Esophagus muscularis mucosa (tissue), 4 donors: ENCODE measurements at regions of chr5 and their contacts with region 1.

Region 1: DNA sequence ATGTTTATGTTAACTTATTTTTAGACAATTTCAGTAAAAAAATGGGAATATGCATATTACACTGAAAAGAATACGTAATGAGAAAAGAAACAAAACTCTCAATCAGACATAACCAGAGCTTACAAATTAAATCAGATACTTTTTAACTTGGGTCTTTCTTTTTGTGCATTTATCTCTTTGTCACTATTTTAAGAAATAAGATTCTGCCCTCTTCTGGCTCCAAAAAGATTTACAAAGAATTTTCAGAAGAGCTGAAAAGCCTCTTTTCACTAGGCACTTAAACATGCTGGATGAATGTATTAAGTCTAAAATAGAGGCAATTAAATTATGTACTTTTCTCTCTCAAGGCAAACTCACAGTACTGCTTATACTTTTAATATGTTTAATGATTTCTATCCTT is 55.5 kb downstream of the CEP120 start:
- DNase-seq: no peak
- H3K4me3 ChIP-seq: no peak overlapping the region
- H3K27ac ChIP-seq: no peak overlapping the region
- H3K4me1 ChIP-seq: peaks cover 3 to 34% (median 28%) of the 10 kb centered on the region in 4 donors
- H3K27me3 ChIP-seq: no peaks in the 10 kb centered on the region
- CTCF ChIP-seq: peak; percentile 36 to 48 (median 47)
- EP300 ChIP-seq: no peak
- POLR2A ChIP-seq: no peak

Region 2: GRCh38 chr5:122500245-122501075 is 867.3 kb before region 1 on chr5:
- intact Hi-C with region 1: loop called (anchors 5 kb)
- DNase-seq: no peak
- H3K4me3 ChIP-seq: no peak overlapping the region
- H3K27ac ChIP-seq: peak overlapping the region in 2 of 4 donors; percentile 42 to 48
- H3K4me1 ChIP-seq: peaks cover 0 to 14% (median 10%) of the 10 kb centered on the region in 4 donors
- H3K27me3 ChIP-seq: no peaks in the 10 kb centered on the region
- CTCF ChIP-seq: peak; percentile 31 to 54 (median 45)
- EP300 ChIP-seq: no peak
- POLR2A ChIP-seq: no peak

Region 3: GRCh38 chr5:122515709-122516431 is 851.9 kb before region 1 on chr5:
- intact Hi-C with region 1: loop called (anchors 5 kb)
- DNase-seq: no peak
- H3K4me3 ChIP-seq: no peak overlapping the region
- H3K27ac ChIP-seq: no peak overlapping the region
- H3K4me1 ChIP-seq: no peaks in the 10 kb centered on the region
- H3K27me3 ChIP-seq: peaks cover 0 to 5% (median 0%) of the 10 kb centered on the region in 4 donors
- CTCF ChIP-seq: peak; percentile 41 to 56 (median 44)
- EP300 ChIP-seq: no peak
- POLR2A ChIP-seq: no peak